ENCODE measurements at regions of chr1 and their contacts with region 1.

Region 1: DNA sequence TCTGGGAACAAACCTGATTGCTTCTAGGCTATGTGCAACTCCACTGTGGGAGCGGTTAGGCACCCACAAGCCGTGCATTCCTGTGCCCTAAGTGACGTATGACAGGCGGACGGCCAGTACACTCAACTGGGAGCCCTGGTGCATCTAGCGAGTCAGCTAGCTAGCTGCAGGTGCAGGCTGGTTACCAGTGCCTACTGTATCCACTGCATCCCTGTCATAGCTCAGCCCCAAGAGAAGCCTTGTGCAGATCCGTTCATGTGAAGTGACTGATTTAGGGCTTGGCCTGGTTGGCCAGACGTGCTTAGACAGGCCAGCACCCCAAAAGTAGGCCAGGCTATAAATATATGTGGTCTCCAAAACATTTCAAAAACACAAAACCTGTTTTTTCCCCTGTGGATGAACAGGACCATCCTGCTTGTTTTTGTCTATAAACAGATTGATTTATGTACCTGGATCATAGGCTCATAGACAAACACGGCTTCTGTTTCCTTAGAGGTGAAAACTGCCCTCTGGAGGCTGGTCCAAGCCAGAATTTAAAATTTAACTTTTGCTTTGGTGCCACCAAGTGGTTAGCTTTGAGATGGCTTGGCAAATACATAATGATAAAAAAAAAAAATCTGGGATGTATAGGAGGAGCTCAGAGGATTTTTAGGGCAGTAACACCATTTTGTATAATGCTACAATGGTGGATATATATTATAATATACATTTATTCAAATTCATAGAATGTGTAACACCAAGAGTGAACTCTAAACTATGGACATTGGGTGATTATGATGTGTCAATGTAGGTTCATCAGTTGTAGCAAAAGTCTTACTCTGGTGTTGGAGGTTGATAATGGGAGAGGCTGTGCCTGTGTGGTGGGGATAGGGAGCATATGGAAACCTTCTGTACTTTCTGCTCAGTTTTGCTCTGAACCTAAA is 68.5 kb downstream of the GIPC2 start:
- DNase-seq: peak; percentile 89
- H3K4me3 ChIP-seq: no peak overlapping the region
- H3K27ac ChIP-seq: no peak overlapping the region
- H3K4me1 ChIP-seq: 0 out of 2 replicates have a peak, but pooled peaks cover 5% of the 10 kb centered on the region
- H3K27me3 ChIP-seq: no peaks in the 10 kb centered on the region

Region 2: GRCh38 chr1:77355010-77355409 is 759.3 kb before region 1 on chr1:
- in situ Hi-C with region 1: no loop called
- DNase-seq: peak; percentile 18
- H3K4me3 ChIP-seq: no peak overlapping the region
- H3K27ac ChIP-seq: no peak overlapping the region
- H3K4me1 ChIP-seq: peaks cover 10% of the 10 kb centered on the region
- H3K27me3 ChIP-seq: no peaks in the 10 kb centered on the region

Region 3: GRCh38 chr1:77978969-77979876 is 135.1 kb before region 1 on chr1 and contains the start of gene FUBP1:
- in situ Hi-C with region 1: loop called (anchors 10 kb)
- DNase-seq: peak; percentile 100
- H3K4me3 ChIP-seq: peak within 1 kb of the TSS; percentile 96
- H3K27ac ChIP-seq: peak within 1 kb of the TSS; percentile 98
- H3K4me1 ChIP-seq: peaks cover 42% of the 10 kb centered on the region
- H3K27me3 ChIP-seq: no peaks in the 10 kb centered on the region
- total RNA-seq, gene FUBP1: 59.1 and 69.9 TPM in 2 replicates

Region 4: GRCh38 chr1:78617615-78618026 is 503.3 kb after region 1 on chr1:
- in situ Hi-C with region 1: no loop called
- DNase-seq: peak; percentile 93
- H3K4me3 ChIP-seq: no peak overlapping the region
- H3K27ac ChIP-seq: no peak overlapping the region
- H3K4me1 ChIP-seq: peaks cover 25% of the 10 kb centered on the region
- H3K27me3 ChIP-seq: no peaks in the 10 kb centered on the region

Measured in GM23248 (cell line).